ENCODE measurements at regions of chr22 and their contacts with region 1.

Region 1: DNA sequence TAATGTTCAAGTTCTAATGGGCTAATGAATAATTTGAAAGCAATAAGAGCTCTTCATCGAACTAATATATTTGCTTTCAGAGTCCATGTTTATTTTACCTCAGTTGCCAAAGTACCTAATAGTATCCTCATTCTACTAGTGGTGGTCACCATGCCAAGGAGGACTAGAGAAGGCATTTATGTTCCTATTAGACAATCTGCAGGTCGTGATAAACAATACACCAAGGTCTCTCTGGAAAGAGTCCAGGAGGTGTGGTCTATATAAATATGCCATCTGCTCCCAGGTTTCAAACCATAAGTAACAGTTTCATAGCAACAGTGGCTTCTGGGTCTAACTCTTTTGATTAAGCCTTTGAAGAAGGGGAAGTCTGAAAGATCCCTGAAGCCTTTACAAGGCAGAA is 42.9 kb downstream of the ARFGAP3 start:
- DNase-seq: no peak
- ATAC-seq: no peak
- H3K4me3 ChIP-seq: no peak overlapping the region
- H3K4me3 Mint-ChIP-seq: no peak overlapping the region
- H3K27ac ChIP-seq: no peak overlapping the region
- H3K27ac Mint-ChIP-seq: no peak overlapping the region
- H3K4me1 ChIP-seq: no peaks in the 10 kb centered on the region
- H3K4me1 Mint-ChIP-seq: no peaks in the 10 kb centered on the region
- H3K27me3 ChIP-seq: no peaks in the 10 kb centered on the region
- H3K27me3 Mint-ChIP-seq: no peaks in the 10 kb centered on the region
- CTCF ChIP-seq: no peak

Region 2: GRCh38 chr22:42662114-42663021 is 151.8 kb before region 1 on chr22:
- CTCF ChIA-PET with region 1: no interaction called
- POLR2A ChIA-PET with region 1: no interaction called
- intact Hi-C with region 1: loop called in 1 of 2 experiments (anchors 5 kb)
- DNase-seq: peak; percentile 67 to 89 (median 74)
- ATAC-seq: peak; percentile 93
- H3K4me3 ChIP-seq: peak overlapping the region; percentile 67
- H3K4me3 Mint-ChIP-seq: peak overlapping the region; percentile 30
- H3K27ac ChIP-seq: no peak overlapping the region
- H3K27ac Mint-ChIP-seq: no peak overlapping the region
- H3K4me1 ChIP-seq: peaks cover 15% of the 10 kb centered on the region
- H3K4me1 Mint-ChIP-seq: no peaks in the 10 kb centered on the region
- H3K27me3 ChIP-seq: no peaks in the 10 kb centered on the region
- H3K27me3 Mint-ChIP-seq: peaks cover 4% of the 10 kb centered on the region
- CTCF ChIP-seq: peak; percentile 91

Region 3: GRCh38 chr22:42907404-42908373 is 93.5 kb after region 1 on chr22:
- CTCF ChIA-PET with region 1: no interaction called
- POLR2A ChIA-PET with region 1: no interaction called
- intact Hi-C with region 1: no loop called
- DNase-seq: no peak
- ATAC-seq: no peak
- H3K4me3 ChIP-seq: no peak overlapping the region
- H3K4me3 Mint-ChIP-seq: no peak overlapping the region
- H3K27ac ChIP-seq: no peak overlapping the region
- H3K27ac Mint-ChIP-seq: no peak overlapping the region
- H3K4me1 ChIP-seq: no peaks in the 10 kb centered on the region
- H3K4me1 Mint-ChIP-seq: peaks cover 16% of the 10 kb centered on the region
- H3K27me3 ChIP-seq: no peaks in the 10 kb centered on the region
- H3K27me3 Mint-ChIP-seq: no peaks in the 10 kb centered on the region
- CTCF ChIP-seq: no peak